Sigmoid colon (tissue), 7 donors: ENCODE measurements at regions of chr1 and their contacts with region 1.

Region 1: GRCh38 chr1:87131809-87132283 is 196.8 kb upstream of the LMO4 start:
- DNase-seq: peak; percentile 85
- H3K4me3 ChIP-seq: peak overlapping the region; percentile 31 to 54 (median 46)
- H3K27ac ChIP-seq: peak overlapping the region; percentile 6 to 57 (median 20)
- H3K4me1 ChIP-seq: peaks cover 0 to 12% (median 7%) of the 10 kb centered on the region in 4 donors
- H3K27me3 ChIP-seq: no peaks in the 10 kb centered on the region
- CTCF ChIP-seq: peak; percentile 52 to 93 (median 73)
- EP300 ChIP-seq: no peak
- POLR2A ChIP-seq: no peak

Region 2: GRCh38 chr1:86981482-86982213 is 150.2 kb before region 1 on chr1:
- intact Hi-C with region 1: no loop called
- DNase-seq: no peak
- H3K4me3 ChIP-seq: no peak overlapping the region
- H3K27ac ChIP-seq: no peak overlapping the region
- H3K4me1 ChIP-seq: no peaks in the 10 kb centered on the region
- H3K27me3 ChIP-seq: no peaks in the 10 kb centered on the region
- CTCF ChIP-seq: no peak
- EP300 ChIP-seq: no peak
- POLR2A ChIP-seq: no peak

Region 3: DNA sequence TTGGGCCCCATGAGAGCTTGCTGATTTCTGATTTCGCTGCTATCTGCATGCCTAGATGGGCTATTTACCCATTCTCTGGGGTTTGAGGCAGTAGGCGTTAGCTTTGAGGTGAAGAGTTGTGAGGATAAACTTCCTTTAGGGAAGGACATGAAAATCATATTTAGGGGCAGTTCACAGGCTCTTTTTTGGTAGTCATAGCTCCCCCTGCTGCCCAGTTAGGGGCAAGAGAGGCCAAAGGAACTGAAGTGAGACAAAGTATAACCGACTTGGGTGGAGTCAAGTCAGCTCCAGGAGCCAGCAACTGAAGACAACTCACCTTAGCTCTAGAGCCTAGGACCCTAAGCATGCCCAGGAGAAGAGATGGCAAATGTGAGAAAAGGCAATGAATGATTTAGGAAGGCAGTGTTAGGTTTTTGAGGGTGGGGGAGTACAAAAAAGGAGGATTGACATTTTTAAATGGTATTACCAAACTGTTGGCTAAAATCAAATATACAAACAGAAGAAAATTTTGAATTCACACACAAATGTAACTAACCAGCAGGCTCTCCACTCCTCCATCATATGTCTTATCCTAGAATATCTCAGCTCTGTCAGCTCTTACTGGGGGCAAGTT is 822.0 kb after region 1 on chr1:
- intact Hi-C with region 1: loop called (anchors 5 kb)
- DNase-seq: peak; percentile 77
- H3K4me3 ChIP-seq: no peak overlapping the region
- H3K27ac ChIP-seq: no peak overlapping the region
- H3K4me1 ChIP-seq: peaks cover 0 to 26% (median 11%) of the 10 kb centered on the region in 4 donors
- H3K27me3 ChIP-seq: no peaks in the 10 kb centered on the region
- CTCF ChIP-seq: peak; percentile 50 to 79 (median 58)
- EP300 ChIP-seq: peak in 1 of 4 donors; percentile 5
- POLR2A ChIP-seq: no peak